Head of caudate nucleus (tissue), 42 donors: ENCODE measurements at regions of chr3 and their contacts with region 1.

Region 1: GRCh38 chr3:32457971-32458471 is 44.6 kb downstream of the CMTM6 start:
- DNase-seq: peak in 1 of 42 donors; percentile 33

Region 2: GRCh38 chr3:32283304-32283703 is 174.7 kb before region 1 on chr3:
- intact Hi-C with region 1: loop called (anchors 10 kb)
- DNase-seq: peak in 1 of 42 donors; percentile 28